CD8-positive, alpha-beta T cell (primary cell): ENCODE measurements at regions of chr1 and their contacts with region 1.

Region 1: GRCh38 chr1:211476200-211476849 is 15.6 kb downstream of the RD3 start:
- DNase-seq: peak; percentile 46 to 84 (median 81)
- ATAC-seq: peak; percentile 73
- H3K4me3 ChIP-seq: no peak overlapping the region
- H3K4me3 Mint-ChIP-seq: no peak overlapping the region
- H3K27ac ChIP-seq: no peak overlapping the region
- H3K27ac Mint-ChIP-seq: no peak overlapping the region
- H3K4me1 ChIP-seq: no peaks in the 10 kb centered on the region
- H3K4me1 Mint-ChIP-seq: no peaks in the 10 kb centered on the region
- H3K27me3 ChIP-seq: peaks cover 0 to 2% of the 10 kb centered on the region in 2 experiments
- H3K27me3 Mint-ChIP-seq: peaks cover 27% of the 10 kb centered on the region
- CTCF ChIP-seq: peak; percentile 89

Region 2: GRCh38 chr1:210407207-210407886 is 1069.0 kb before region 1 on chr1:
- CTCF ChIA-PET with region 1: no interaction called
- POLR2A ChIA-PET with region 1: no interaction called
- intact Hi-C with region 1: loop called in 1 of 2 experiments (anchors 1 kb)
- DNase-seq: peak; percentile 33 to 85 (median 70)
- ATAC-seq: peak; percentile 64
- H3K4me3 ChIP-seq: no peak overlapping the region
- H3K4me3 Mint-ChIP-seq: no peak overlapping the region
- H3K27ac ChIP-seq: no peak overlapping the region
- H3K27ac Mint-ChIP-seq: no peak overlapping the region
- H3K4me1 ChIP-seq: no peaks in the 10 kb centered on the region
- H3K4me1 Mint-ChIP-seq: peaks cover 3% of the 10 kb centered on the region
- H3K27me3 ChIP-seq: no peaks in the 10 kb centered on the region
- H3K27me3 Mint-ChIP-seq: no peaks in the 10 kb centered on the region
- CTCF ChIP-seq: peak; percentile 92

Region 3: DNA sequence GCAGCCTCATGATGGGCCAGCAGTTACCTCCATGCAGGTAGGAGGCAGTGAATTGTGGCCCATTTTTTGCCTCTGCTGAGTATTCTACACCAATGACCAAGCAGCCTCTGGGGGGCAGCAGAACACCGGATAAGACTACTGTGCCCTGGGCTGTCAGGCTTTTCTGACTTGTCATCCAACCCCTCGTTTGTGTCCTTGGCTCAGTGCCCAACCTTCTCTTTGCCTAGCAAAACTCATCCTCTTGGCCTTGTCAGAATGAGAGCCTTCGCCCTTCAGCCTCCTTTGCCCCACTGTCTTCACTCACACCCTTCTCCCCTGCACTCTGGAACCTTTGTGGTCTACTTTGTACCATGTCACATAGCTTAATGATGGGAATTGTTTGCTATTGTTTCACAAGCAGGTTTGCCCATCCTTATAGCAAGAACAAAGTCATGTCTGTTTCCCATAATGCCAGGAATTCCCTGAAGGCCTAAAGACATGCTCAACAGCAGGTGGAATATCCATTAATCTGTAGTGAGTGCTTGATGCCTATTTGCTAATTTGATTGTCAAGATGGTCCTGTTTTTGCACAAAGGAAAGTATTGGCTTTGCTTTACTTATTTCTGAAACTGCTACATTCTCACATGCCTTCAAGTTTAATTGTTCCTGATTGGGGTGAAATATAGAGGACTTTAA is 891.7 kb before region 1 on chr1:
- CTCF ChIA-PET with region 1: interaction called, 4 read pairs
- POLR2A ChIA-PET with region 1: no interaction called
- intact Hi-C with region 1: loop called in 1 of 2 experiments (anchors 1 kb)
- DNase-seq: peak; percentile 37 to 72 (median 63)
- ATAC-seq: no peak
- H3K4me3 ChIP-seq: no peak overlapping the region
- H3K4me3 Mint-ChIP-seq: no peak overlapping the region
- H3K27ac ChIP-seq: no peak overlapping the region
- H3K27ac Mint-ChIP-seq: no peak overlapping the region
- H3K4me1 ChIP-seq: peaks cover 4% of the 10 kb centered on the region
- H3K4me1 Mint-ChIP-seq: peaks cover 15% of the 10 kb centered on the region
- H3K27me3 ChIP-seq: no peaks in the 10 kb centered on the region
- H3K27me3 Mint-ChIP-seq: no peaks in the 10 kb centered on the region
- CTCF ChIP-seq: peak; percentile 41

Region 4: GRCh38 chr1:211415700-211416099 is 60.6 kb before region 1 on chr1:
- CTCF ChIA-PET with region 1: no interaction called
- POLR2A ChIA-PET with region 1: no interaction called
- intact Hi-C with region 1: loop called in 1 of 2 experiments (anchors 10 kb)
- DNase-seq: no peak
- ATAC-seq: no peak
- H3K4me3 ChIP-seq: no peak overlapping the region
- H3K4me3 Mint-ChIP-seq: peak overlapping the region; percentile 59
- H3K27ac ChIP-seq: no peak overlapping the region
- H3K27ac Mint-ChIP-seq: peak overlapping the region; percentile 72
- H3K4me1 ChIP-seq: peaks cover 8% of the 10 kb centered on the region
- H3K4me1 Mint-ChIP-seq: peaks cover 13% of the 10 kb centered on the region
- H3K27me3 ChIP-seq: no peaks in the 10 kb centered on the region
- H3K27me3 Mint-ChIP-seq: no peaks in the 10 kb centered on the region
- CTCF ChIP-seq: no peak

Region 5: DNA sequence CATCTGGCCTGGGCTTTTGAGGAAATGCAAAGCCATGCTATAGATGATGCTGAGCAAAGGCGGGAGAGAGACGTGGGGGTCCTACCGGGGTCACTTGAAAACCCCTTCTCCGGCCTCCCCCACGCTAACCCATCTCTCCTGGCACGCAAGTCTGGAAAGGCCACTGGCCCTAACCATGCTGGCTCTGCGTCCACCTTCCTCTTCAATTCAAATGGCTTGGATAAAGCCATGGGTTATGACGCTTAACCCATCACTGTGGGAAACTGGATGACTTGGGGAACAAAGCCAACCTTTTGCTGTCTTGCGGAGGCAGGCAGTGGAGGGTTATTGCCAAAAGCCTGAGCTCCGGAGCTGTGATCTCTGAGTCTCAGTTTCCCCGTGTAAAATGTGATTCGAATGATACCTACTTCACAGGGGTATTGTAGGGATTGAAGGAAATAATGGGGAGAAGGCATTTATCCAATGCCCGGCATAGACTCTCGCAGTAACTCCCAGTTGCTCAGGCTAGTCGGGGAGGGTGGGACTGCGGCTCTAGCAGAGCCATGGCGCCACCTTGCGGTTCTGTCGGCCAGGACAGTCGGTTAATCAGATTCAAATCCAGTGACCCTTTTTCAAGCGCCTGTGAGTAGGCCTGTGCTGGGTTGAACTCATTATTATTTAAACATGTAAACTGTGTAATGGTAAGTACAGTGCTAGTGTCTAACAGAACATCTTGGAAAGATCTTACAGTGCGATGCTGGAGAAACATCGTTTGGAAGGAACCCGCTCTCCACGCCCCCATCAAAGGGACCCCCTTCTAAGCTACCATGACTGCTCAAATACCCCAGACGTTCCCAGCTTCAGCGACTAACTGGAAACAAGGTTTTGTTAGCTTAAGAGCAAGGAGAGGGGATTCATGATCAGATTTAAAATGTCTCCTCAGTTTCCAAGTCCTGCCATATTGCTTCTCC is 178.8 kb after region 1 on chr1:
- CTCF ChIA-PET with region 1: interaction called, 6 read pairs
- POLR2A ChIA-PET with region 1: no interaction called
- intact Hi-C with region 1: loop called (anchors 10 kb)
- DNase-seq: peak; percentile 63 to 86 (median 83)
- ATAC-seq: peak; percentile 95
- H3K4me3 ChIP-seq: no peak overlapping the region
- H3K4me3 Mint-ChIP-seq: no peak overlapping the region
- H3K27ac ChIP-seq: no peak overlapping the region
- H3K27ac Mint-ChIP-seq: no peak overlapping the region
- H3K4me1 ChIP-seq: no peaks in the 10 kb centered on the region
- H3K4me1 Mint-ChIP-seq: no peaks in the 10 kb centered on the region
- H3K27me3 ChIP-seq: no peaks in the 10 kb centered on the region
- H3K27me3 Mint-ChIP-seq: peaks cover 2% of the 10 kb centered on the region
- CTCF ChIP-seq: peak; percentile 86